Activated T-helper 1 cell treated with anti-CD3 and anti-CD28 coated beads, Interleukin-12 subunit alpha, Interleukin-12 subunit beta, Interleukin-2, Interleukin-4 antibody, amounts not matched to agents 30 ng/mL and 10 ng/mL and 1 ng/mL, durations not matched to agents 14 hours and 24 hours and 36 hours (primary cell): ENCODE measurements at regions of chr3 and their contacts with region 1.

Region 1: GRCh38 chr3:112582244-112582874 is 20.5 kb downstream of the SLC35A5 start:
- DNase-seq: no peak
- H3K4me3 Mint-ChIP-seq: no peak overlapping the region
- H3K27ac Mint-ChIP-seq: no peak overlapping the region
- H3K4me1 Mint-ChIP-seq: peaks cover 6% of the 10 kb centered on the region
- H3K27me3 Mint-ChIP-seq: no peaks in the 10 kb centered on the region

Region 2: DNA sequence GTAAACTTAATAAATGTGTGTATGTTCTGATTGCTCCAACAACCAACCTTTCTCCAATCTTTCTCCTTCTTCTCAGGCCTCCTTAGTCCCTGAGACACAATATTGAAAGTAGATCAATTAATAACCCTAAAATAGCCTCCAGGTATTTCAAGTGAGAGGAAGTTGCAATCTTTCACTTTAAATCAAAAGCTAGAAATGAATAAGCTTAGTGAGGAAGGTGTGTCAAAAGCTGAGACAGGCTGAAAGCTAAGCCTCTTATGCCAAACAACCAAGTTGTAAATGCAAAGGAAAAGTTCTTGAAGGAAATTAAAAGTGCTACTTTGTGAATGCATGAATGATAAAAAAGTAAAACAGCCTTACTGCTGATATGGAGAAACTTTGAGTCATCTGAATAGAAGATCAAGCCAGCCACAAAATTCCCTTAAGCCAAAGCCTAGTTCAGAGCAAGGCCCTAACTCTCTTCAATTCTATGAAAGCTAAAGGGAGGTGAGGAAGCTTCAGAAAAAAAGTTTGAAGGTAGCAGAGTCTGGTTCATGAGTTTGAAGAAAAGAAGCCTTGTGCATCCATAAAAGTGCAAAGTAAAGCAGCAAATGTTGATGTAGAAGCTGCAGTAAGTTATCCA is 20.0 kb after region 1 on chr3:
- intact Hi-C with region 1: loop called (anchors 2 kb)
- DNase-seq: no peak
- H3K4me3 Mint-ChIP-seq: no peak overlapping the region
- H3K27ac Mint-ChIP-seq: peak overlapping the region; percentile 23
- H3K4me1 Mint-ChIP-seq: peaks cover 31% of the 10 kb centered on the region
- H3K27me3 Mint-ChIP-seq: peaks cover 4% of the 10 kb centered on the region

Region 3: DNA sequence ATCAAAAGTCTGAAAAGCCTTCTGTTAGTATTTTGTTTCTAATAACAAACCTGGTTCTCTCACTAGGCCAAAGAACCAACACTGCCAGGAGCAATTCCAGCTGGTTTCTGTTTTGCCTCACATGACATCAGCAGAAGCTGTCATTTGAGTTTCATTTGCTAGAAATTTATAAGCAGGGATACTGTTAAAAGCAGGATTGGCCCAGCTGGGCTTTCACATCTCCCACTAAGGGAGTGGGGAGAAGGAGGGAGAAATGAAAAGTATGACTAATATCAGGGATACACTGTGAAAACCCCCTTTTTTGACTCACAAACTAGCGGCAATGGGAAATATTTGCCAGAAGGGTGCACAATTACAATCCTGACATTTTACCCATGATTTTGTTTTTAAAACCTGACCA is 53.3 kb after region 1 on chr3:
- intact Hi-C with region 1: loop called (anchors 1 kb)
- DNase-seq: no peak
- H3K4me3 Mint-ChIP-seq: no peak overlapping the region
- H3K27ac Mint-ChIP-seq: peak overlapping the region; percentile 6
- H3K4me1 Mint-ChIP-seq: peaks cover 23% of the 10 kb centered on the region
- H3K27me3 Mint-ChIP-seq: no peaks in the 10 kb centered on the region

Region 4: DNA sequence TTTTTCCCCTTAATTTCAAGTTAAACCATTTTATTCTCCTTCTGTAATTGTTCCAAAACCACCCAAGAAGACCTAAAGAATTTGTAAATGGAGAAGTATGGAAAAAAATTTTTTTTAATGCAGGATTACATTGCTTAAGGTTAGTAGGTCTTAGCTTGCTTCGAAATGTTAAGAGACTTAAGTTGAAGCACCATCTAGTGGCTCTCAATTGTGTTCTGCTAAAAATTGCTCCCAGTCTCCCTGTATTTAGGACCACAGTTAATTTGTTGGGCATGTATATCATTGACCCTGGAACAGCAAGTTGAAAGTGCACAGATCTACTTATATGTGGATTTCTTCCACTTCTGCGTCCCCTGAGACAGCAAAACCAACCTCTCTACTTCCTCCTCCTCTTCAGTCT is 231.9 kb after region 1 on chr3:
- intact Hi-C with region 1: loop called (anchors 5 kb)
- DNase-seq: no peak
- H3K4me3 Mint-ChIP-seq: no peak overlapping the region
- H3K27ac Mint-ChIP-seq: no peak overlapping the region
- H3K4me1 Mint-ChIP-seq: peaks cover 33% of the 10 kb centered on the region
- H3K27me3 Mint-ChIP-seq: peaks cover 3% of the 10 kb centered on the region

Region 5: GRCh38 chr3:112979240-112979832 is 397.0 kb after region 1 on chr3:
- intact Hi-C with region 1: loop called (anchors 1 kb)
- DNase-seq: no peak
- H3K4me3 Mint-ChIP-seq: no peak overlapping the region
- H3K27ac Mint-ChIP-seq: no peak overlapping the region
- H3K4me1 Mint-ChIP-seq: peaks cover 67% of the 10 kb centered on the region
- H3K27me3 Mint-ChIP-seq: no peaks in the 10 kb centered on the region